ENCODE measurements at regions of chr5 and their contacts with region 1.

Region 1: GRCh38 chr5:80083101-80083890 is 48.1 kb downstream of the THBS4 start:
- DNase-seq: peak; percentile 46 to 64 (median 57)
- H3K4me3 ChIP-seq: peak overlapping the region; percentile 9
- H3K27ac ChIP-seq: peak overlapping the region; percentile 46 to 69
- H3K4me1 ChIP-seq: no peaks in the 10 kb centered on the region
- H3K27me3 ChIP-seq: no peaks in the 10 kb centered on the region
- CTCF ChIP-seq: peak; percentile 77 to 87 (median 84)
- EP300 ChIP-seq: no peak
- POLR2A ChIP-seq: no peak

Region 2: GRCh38 chr5:79560771-79561524 is 522.3 kb before region 1 on chr5:
- intact Hi-C with region 1: loop called in 1 of 4 experiments (anchors 10 kb)
- DNase-seq: no peak
- H3K4me3 ChIP-seq: no peak overlapping the region
- H3K27ac ChIP-seq: no peak overlapping the region
- H3K4me1 ChIP-seq: no peaks in the 10 kb centered on the region
- H3K27me3 ChIP-seq: no peaks in the 10 kb centered on the region
- CTCF ChIP-seq: no peak
- EP300 ChIP-seq: no peak
- POLR2A ChIP-seq: no peak

Region 3: DNA sequence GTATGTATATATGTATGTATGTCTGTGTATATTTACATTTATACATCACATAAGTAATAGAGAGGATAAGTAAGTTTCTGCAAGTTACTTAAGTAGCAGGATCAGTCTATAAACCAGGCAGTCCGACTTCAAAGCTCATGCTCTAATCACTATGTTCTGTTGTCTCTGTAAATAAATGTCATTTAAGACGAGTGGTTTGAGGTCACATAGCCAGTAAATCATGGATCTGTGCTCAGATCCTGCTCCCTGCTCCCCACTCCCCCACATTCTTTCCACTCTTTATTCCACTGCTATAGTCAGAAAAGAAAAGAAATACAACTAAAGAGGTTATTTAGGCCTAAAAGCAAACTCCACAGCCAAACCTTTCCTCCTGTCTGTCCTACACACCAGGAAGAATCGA is 82.2 kb after region 1 on chr5:
- intact Hi-C with region 1: no loop called
- DNase-seq: peak in 1 of 5 donors; percentile 31
- H3K4me3 ChIP-seq: no peak overlapping the region
- H3K27ac ChIP-seq: no peak overlapping the region
- H3K4me1 ChIP-seq: peaks cover 5% of the 10 kb centered on the region
- H3K27me3 ChIP-seq: no peaks in the 10 kb centered on the region
- CTCF ChIP-seq: no peak
- EP300 ChIP-seq: no peak
- POLR2A ChIP-seq: no peak

Measured in ovary (tissue), 10 donors.